CD4-positive, alpha-beta memory T cell (primary cell): ENCODE measurements at regions of chr6 and their contacts with region 1.

Region 1: GRCh38 chr6:166950443-166950821 is 5.9 kb downstream of the RNASET2 start:
- DNase-seq: peak in 4 of 5 donors; percentile 38 to 56 (median 41)
- H3K4me3 ChIP-seq: peak overlapping the region; percentile 26 to 39
- H3K4me3 Mint-ChIP-seq: peak overlapping the region; percentile 83 to 94 (median 88)
- H3K27ac ChIP-seq: peak overlapping the region; percentile 92
- H3K27ac Mint-ChIP-seq: peak overlapping the region; percentile 94 to 100 (median 99)
- H3K4me1 ChIP-seq: peaks cover 79% of the 10 kb centered on the region
- H3K4me1 Mint-ChIP-seq: peaks cover 53 to 75% (median 60%) of the 10 kb centered on the region in 4 donors
- H3K27me3 ChIP-seq: no peaks in the 10 kb centered on the region
- H3K27me3 Mint-ChIP-seq: no peaks in the 10 kb centered on the region

Region 2: DNA sequence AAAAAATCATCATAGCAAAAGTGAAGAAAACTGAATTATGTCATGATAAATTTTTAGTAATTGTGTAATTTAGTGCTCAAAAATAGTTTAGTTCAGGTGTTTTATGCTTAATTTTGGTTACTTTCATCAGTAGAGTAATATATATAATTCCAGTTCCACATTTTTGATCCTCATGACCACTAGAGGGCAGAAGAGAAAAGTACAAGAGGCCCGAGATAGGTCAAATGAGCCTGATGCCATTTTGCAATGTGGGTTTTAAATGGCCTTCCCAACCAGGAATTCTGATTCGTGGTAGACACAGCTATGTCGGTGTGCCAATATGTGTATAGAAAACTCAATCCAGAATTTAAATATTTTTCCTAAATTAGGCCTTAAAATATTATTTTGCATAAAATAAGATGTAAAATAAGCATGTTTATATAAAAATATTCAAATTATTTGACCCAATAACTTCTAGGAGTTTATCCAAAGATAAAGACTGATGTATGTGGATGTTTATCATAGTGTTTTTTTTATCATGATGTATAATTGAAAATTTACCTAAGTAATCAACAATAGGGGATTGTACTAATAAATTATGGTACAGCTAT is 163.6 kb before region 1 on chr6:
- CTCF ChIA-PET with region 1: interaction called, 27 read pairs
- POLR2A ChIA-PET with region 1: interaction called, 3 read pairs
- intact Hi-C with region 1: loop called (anchors 1 kb)
- DNase-seq: peak in 4 of 5 donors; percentile 60 to 66 (median 62)
- H3K4me3 ChIP-seq: no peak overlapping the region
- H3K4me3 Mint-ChIP-seq: no peak overlapping the region
- H3K27ac ChIP-seq: no peak overlapping the region
- H3K27ac Mint-ChIP-seq: no peak overlapping the region
- H3K4me1 ChIP-seq: no peaks in the 10 kb centered on the region
- H3K4me1 Mint-ChIP-seq: no peaks in the 10 kb centered on the region
- H3K27me3 ChIP-seq: no peaks in the 10 kb centered on the region
- H3K27me3 Mint-ChIP-seq: no peaks in the 10 kb centered on the region

Region 3: DNA sequence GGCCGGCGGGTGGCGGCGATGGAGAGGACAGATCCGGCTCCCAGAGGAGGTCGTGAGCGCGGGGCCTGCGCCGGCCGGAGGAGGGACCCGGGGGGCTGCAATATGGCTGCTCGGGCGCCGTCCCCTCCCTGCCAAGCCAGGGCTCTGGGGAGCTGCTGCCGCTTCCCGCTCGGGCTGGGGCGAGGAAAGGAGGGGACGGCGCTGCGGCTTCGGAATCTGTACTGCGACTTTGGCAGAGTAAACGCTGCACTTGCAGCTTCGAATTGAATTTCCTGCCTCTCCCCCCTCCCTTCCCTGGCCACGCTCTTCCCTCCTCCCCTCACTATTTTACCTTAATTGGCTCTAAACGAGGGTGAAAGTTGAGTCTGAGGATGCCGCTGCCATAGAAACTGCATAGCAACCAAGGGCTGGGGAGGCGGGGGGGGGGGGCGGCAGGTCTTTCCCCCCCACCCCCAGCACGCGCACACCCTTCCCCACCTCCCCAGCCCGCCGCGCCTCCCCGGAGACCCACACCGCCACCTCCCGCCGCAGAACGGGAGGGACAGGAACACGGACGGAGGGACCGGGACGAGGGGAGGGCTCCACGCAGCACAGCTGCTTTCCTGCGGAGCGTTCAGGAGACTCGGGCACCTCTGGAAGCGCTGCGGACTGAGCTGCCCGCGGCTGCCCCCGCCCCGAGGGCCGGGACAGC is 88.0 kb before region 1 on chr6:
- CTCF ChIA-PET with region 1: interaction called, 4 read pairs
- POLR2A ChIA-PET with region 1: interaction called, 7 read pairs
- intact Hi-C with region 1: loop called (anchors 5 kb)
- DNase-seq: peak; percentile 31 to 58 (median 46)
- H3K4me3 ChIP-seq: peak overlapping the region; percentile 5 to 53
- H3K4me3 Mint-ChIP-seq: peak overlapping the region; percentile 82 to 94 (median 88)
- H3K27ac ChIP-seq: no peak overlapping the region
- H3K27ac Mint-ChIP-seq: peak overlapping the region in 4 of 7 donors; percentile 59 to 69 (median 64)
- H3K4me1 ChIP-seq: peaks cover 14% of the 10 kb centered on the region
- H3K4me1 Mint-ChIP-seq: peaks cover 6 to 12% (median 7%) of the 10 kb centered on the region in 4 donors
- H3K27me3 ChIP-seq: no peaks in the 10 kb centered on the region
- H3K27me3 Mint-ChIP-seq: peaks cover 0 to 4% of the 10 kb centered on the region in 2 donors

Region 4: DNA sequence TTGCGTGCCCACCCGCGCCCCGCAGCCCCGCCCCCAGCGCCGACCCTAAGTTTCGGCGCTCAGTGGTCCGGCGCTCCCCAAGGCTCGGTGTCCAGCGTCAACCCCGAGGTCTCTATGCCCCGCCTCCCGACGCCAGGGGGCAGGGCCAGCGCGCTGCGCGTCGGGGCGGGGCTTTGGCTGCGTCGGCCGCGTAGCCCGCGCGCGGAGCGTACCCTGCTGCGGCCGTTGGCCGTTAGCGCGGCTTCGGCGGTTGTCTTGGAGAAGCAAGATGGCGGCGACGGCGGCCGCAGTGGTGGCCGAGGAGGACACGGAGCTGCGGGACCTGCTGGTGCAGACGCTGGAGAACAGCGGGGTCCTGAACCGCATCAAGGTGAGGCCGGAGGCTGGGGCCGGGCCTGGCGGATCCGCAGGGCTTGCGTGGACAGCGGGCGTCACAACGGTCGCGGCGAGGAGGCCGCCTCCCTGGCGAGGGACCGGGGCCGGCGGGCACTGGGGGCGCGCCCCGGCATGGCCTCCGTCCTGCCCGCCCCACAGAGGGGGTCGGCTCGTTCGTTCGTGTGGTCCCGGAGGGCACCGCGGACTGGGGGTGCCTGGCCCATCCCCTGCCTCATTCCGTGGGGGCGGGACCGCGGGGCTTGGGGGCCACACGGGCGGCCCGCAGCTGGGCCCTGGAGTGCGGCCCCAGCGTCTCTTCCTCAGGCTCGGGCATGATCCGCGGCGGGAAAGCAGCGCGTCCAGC is 48.9 kb after region 1 on chr6 and contains the start of gene CEP43:
- CTCF ChIA-PET with region 1: interaction called, 7 read pairs
- POLR2A ChIA-PET with region 1: interaction called, 41 read pairs
- intact Hi-C with region 1: no loop called
- DNase-seq: peak; percentile 81 to 89 (median 87)
- H3K4me3 ChIP-seq: peak within 1 kb of the TSS; percentile 85 to 95
- H3K4me3 Mint-ChIP-seq: peak within 1 kb of the TSS; percentile 90 to 95 (median 94)
- H3K27ac ChIP-seq: peak within 1 kb of the TSS; percentile 81
- H3K27ac Mint-ChIP-seq: peak within 1 kb of the TSS; percentile 65 to 93 (median 91)
- H3K4me1 ChIP-seq: peaks cover 38% of the 10 kb centered on the region
- H3K4me1 Mint-ChIP-seq: peaks cover 21 to 35% (median 30%) of the 10 kb centered on the region in 4 donors
- H3K27me3 ChIP-seq: no peaks in the 10 kb centered on the region
- H3K27me3 Mint-ChIP-seq: no peaks in the 10 kb centered on the region
- total RNA-seq, gene CEP43: 19.5 to 24.9 TPM

Region 5: DNA sequence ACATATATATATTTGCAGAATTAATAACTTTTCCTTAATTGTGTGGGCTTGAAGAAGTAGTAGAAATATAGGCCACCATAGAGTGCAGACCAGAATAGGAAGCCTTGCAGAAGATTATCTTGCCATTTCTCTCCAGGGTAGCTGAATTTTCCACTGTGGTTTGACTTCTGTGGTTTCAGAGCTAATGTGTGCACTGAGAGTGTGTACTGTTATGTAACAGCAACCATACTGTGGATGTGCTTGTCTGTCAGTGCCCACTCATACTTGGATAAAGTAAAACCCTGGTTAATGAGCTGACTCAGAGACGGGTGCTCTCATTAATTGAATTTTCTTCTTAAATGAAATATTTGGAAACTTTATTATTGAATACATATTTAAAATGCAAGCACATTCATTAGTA is 105.9 kb after region 1 on chr6:
- CTCF ChIA-PET with region 1: no interaction called
- POLR2A ChIA-PET with region 1: interaction called, 5 read pairs
- intact Hi-C with region 1: loop called (anchors 5 kb)
- DNase-seq: peak; percentile 64 to 84 (median 75)
- H3K4me3 ChIP-seq: no peak overlapping the region
- H3K4me3 Mint-ChIP-seq: peak overlapping the region; percentile 12 to 76 (median 67)
- H3K27ac ChIP-seq: no peak overlapping the region
- H3K27ac Mint-ChIP-seq: peak overlapping the region; percentile 6 to 87 (median 76)
- H3K4me1 ChIP-seq: peaks cover 56% of the 10 kb centered on the region
- H3K4me1 Mint-ChIP-seq: peaks cover 37 to 57% (median 42%) of the 10 kb centered on the region in 4 donors
- H3K27me3 ChIP-seq: no peaks in the 10 kb centered on the region
- H3K27me3 Mint-ChIP-seq: no peaks in the 10 kb centered on the region

Region 6: DNA sequence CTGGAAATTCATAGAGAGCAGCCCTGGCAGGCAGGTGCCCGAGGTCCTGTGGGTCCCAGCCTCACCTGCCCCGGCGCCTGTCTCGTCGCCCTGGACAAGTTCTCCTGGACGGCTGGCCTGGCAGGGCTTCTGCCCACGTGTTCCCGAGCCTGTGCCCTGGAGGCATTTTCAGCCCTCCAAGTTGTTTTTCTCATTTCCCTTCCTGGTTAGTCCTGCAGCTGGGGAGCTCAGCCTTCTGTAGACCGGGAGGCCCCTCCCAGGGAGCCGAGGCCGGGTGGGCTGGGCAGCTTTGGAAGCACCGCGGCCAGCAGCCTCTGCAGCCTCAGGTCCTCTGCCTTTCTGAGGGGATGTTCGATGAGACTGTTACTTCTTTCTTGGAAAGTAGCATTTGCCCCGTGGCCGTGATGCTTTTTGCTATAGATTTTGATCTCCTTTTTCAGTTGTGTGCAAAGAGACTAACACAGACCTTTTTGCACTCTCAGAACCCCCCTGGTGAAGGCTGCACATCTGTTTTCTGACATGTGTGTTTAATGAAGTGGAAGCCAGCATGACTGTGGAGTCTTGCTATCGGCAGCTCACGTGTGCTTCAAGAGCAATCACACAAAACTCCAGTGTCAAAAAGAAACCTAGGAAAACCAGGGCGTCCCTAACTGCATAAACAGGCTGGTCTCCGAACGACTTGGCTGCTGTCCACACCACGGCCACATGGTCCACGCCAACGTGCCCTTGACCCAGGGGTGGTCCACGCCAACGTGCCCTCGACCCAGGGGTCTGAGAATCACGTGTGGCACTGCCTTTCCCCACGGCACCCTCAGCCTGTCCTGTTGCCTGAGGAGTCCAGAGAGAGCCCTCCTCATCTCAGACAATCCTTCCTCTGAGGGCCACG is 1698.1 kb after region 1 on chr6:
- CTCF ChIA-PET with region 1: no interaction called
- POLR2A ChIA-PET with region 1: no interaction called
- intact Hi-C with region 1: no loop called
- DNase-seq: no peak
- H3K4me3 ChIP-seq: no peak overlapping the region
- H3K4me3 Mint-ChIP-seq: no peak overlapping the region
- H3K27ac ChIP-seq: no peak overlapping the region
- H3K27ac Mint-ChIP-seq: no peak overlapping the region
- H3K4me1 ChIP-seq: no peaks in the 10 kb centered on the region
- H3K4me1 Mint-ChIP-seq: no peaks in the 10 kb centered on the region
- H3K27me3 ChIP-seq: no peaks in the 10 kb centered on the region
- H3K27me3 Mint-ChIP-seq: peaks cover 4 to 6% of the 10 kb centered on the region in 2 donors